Natural killer cell (primary cell): ENCODE measurements at regions of chr12 and their contacts with region 1.

Region 1: DNA sequence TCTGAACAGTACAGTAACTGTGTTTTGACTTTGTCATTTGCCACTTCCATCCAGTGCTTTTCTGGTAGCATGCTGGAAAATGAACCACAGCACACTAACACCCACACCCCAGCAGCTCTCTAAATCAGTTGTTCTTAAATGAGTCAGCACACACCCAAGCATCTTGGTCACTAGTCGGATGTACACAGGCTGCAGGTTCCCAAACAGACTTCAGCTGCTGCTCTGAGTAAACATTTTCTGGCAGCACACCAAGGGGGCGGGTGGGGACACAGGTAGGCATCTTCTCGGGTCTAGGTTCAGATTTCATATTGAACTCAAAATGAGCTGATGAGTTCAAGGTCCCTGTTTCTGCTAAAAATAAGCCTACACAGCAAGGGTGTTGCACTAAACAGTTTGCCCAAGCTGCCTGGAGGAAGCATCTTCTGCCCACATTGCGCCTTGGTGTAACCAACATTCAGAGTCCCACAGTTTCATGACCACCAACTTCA is 39.8 kb downstream of the IFNG start:
- DNase-seq: peak; percentile 50 to 63
- ATAC-seq: peak; percentile 80 to 85 (median 85)
- H3K4me3 ChIP-seq: no peak overlapping the region
- H3K4me3 Mint-ChIP-seq: no peak overlapping the region
- H3K27ac ChIP-seq: peak overlapping the region; percentile 62
- H3K27ac Mint-ChIP-seq: no peak overlapping the region
- H3K4me1 ChIP-seq: peaks cover 41% of the 10 kb centered on the region
- H3K4me1 Mint-ChIP-seq: peaks cover 0 to 14% of the 10 kb centered on the region in 2 donors
- H3K27me3 ChIP-seq: no peaks in the 10 kb centered on the region
- H3K27me3 Mint-ChIP-seq: no peaks in the 10 kb centered on the region
- CTCF ChIP-seq: no peak

Region 2: GRCh38 chr12:68040450-68041075 is 79.2 kb before region 1 on chr12:
- intact Hi-C with region 1: loop called (anchors 5 kb)
- DNase-seq: peak; percentile 57 to 87
- ATAC-seq: peak; percentile 77 to 80 (median 78)
- H3K4me3 ChIP-seq: no peak overlapping the region
- H3K4me3 Mint-ChIP-seq: no peak overlapping the region
- H3K27ac ChIP-seq: no peak overlapping the region
- H3K27ac Mint-ChIP-seq: peak overlapping the region in 1 of 2 donors; percentile 40
- H3K4me1 ChIP-seq: peaks cover 24% of the 10 kb centered on the region
- H3K4me1 Mint-ChIP-seq: peaks cover 31 to 41% of the 10 kb centered on the region in 2 donors
- H3K27me3 ChIP-seq: no peaks in the 10 kb centered on the region
- H3K27me3 Mint-ChIP-seq: peaks cover 8 to 10% of the 10 kb centered on the region in 2 donors
- CTCF ChIP-seq: peak; percentile 94

Region 3: DNA sequence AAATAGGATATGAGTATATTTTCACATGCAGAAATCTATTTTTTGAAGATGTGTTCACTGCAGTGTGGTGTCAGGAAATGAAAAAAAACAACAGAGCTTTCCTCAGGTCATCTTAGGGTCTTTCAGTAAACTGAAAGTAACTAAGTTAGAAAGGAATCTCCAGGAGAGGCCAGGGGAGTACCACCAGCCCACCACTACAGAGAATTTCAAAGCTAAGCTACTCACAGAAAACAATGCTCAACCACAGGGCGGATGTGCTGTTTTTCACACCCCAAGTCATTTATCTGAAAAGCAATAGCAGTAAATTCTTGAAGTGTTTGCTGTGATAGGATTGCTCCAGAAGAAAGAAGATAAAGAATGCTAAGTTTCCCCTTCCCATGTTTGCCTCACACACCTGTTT is 39.2 kb before region 1 on chr12:
- intact Hi-C with region 1: loop called (anchors 1 kb)
- DNase-seq: peak; percentile 50 to 65
- ATAC-seq: peak; percentile 88 to 98 (median 96)
- H3K4me3 ChIP-seq: no peak overlapping the region
- H3K4me3 Mint-ChIP-seq: peak overlapping the region; percentile 70
- H3K27ac ChIP-seq: peak overlapping the region; percentile 17
- H3K27ac Mint-ChIP-seq: peak overlapping the region; percentile 65 to 81
- H3K4me1 ChIP-seq: peaks cover 7% of the 10 kb centered on the region
- H3K4me1 Mint-ChIP-seq: peaks cover 44 to 52% of the 10 kb centered on the region in 2 donors
- H3K27me3 ChIP-seq: no peaks in the 10 kb centered on the region
- H3K27me3 Mint-ChIP-seq: no peaks in the 10 kb centered on the region
- CTCF ChIP-seq: no peak

Region 4: GRCh38 chr12:68175557-68176061 is 55.8 kb after region 1 on chr12:
- intact Hi-C with region 1: loop called (anchors 5 kb)
- DNase-seq: peak; percentile 40 to 92
- ATAC-seq: peak; percentile 87 to 94 (median 88)
- H3K4me3 ChIP-seq: peak overlapping the region; percentile 8
- H3K4me3 Mint-ChIP-seq: peak overlapping the region; percentile 75
- H3K27ac ChIP-seq: peak overlapping the region; percentile 51
- H3K27ac Mint-ChIP-seq: peak overlapping the region; percentile 83 to 91
- H3K4me1 ChIP-seq: peaks cover 18% of the 10 kb centered on the region
- H3K4me1 Mint-ChIP-seq: peaks cover 24 to 32% of the 10 kb centered on the region in 2 donors
- H3K27me3 ChIP-seq: no peaks in the 10 kb centered on the region
- H3K27me3 Mint-ChIP-seq: no peaks in the 10 kb centered on the region
- CTCF ChIP-seq: no peak

Region 5: DNA sequence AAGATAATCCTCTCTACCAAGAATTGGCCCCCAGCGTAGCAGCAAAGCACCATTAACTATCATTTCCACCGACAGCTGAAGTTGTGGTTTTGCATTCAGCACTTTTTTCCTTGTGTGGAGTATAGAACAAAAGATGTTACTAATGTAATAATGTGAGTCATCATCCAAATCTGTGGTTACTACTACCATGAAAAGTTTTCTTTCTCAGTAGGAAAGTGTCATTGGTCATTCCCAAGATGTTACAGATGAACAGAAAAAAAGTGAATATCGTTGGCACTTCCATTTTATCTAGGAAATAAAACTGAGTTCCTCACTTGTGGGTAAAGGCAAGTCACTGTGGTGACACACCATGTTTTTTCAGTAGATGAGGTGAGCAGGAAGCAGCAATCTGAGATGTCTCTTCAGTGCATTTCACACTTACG is 70.1 kb after region 1 on chr12:
- intact Hi-C with region 1: loop called (anchors 1 kb)
- DNase-seq: peak in 1 of 2 donors; percentile 67
- ATAC-seq: peak; percentile 73 to 87 (median 82)
- H3K4me3 ChIP-seq: no peak overlapping the region
- H3K4me3 Mint-ChIP-seq: peak overlapping the region; percentile 17
- H3K27ac ChIP-seq: peak overlapping the region; percentile 32
- H3K27ac Mint-ChIP-seq: peak overlapping the region; percentile 55 to 77
- H3K4me1 ChIP-seq: no peaks in the 10 kb centered on the region
- H3K4me1 Mint-ChIP-seq: peaks cover 8 to 21% of the 10 kb centered on the region in 2 donors
- H3K27me3 ChIP-seq: no peaks in the 10 kb centered on the region
- H3K27me3 Mint-ChIP-seq: peaks cover 0 to 11% of the 10 kb centered on the region in 2 donors
- CTCF ChIP-seq: no peak

Region 6: DNA sequence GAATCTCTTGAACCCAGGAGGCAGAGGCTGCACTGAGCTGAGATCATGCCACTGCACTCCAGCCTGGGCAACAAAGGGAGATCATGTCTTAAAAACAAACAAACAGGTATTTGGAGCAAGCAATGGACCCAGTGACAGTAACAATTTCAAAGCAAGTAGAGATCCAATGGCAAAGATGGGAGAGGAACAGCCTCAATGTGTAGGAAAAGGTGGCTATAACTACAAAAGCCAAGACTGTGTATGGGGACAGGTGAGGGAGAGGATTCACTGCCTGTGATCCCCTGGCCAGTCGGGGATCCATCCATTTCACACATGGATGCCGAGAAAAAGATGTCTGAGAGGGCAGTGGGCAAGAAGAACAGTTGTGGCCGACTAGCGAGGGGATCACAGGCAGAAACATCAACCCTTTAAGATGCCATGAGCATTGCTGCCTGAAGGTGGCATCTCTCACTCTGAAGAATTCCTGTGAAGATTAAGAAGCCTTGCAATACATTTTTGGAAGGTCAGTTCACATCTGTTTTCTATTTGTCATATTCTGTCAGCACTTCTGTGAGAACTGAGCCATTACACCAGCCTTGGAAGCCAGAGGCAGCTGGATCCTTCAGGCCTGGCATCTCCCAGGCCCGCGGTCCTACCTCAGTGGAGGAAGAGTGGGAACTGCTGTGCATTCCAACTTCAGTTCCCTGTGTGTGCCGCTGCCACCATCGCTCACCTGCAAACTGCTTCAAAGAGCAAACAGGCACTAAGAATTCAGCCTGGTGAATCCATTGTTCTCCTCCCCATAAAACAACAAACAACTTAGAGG is 1295.9 kb after region 1 on chr12:
- intact Hi-C with region 1: no loop called
- DNase-seq: peak in 1 of 2 donors; percentile 30
- ATAC-seq: peak in 1 of 3 donors; percentile 36
- H3K4me3 ChIP-seq: no peak overlapping the region
- H3K4me3 Mint-ChIP-seq: no peak overlapping the region
- H3K27ac ChIP-seq: no peak overlapping the region
- H3K27ac Mint-ChIP-seq: no peak overlapping the region
- H3K4me1 ChIP-seq: no peaks in the 10 kb centered on the region
- H3K4me1 Mint-ChIP-seq: no peaks in the 10 kb centered on the region
- H3K27me3 ChIP-seq: no peaks in the 10 kb centered on the region
- H3K27me3 Mint-ChIP-seq: no peaks in the 10 kb centered on the region
- CTCF ChIP-seq: peak; percentile 11